ENCODE measurements at regions of chr11 and their contacts with region 1.

Region 1: DNA sequence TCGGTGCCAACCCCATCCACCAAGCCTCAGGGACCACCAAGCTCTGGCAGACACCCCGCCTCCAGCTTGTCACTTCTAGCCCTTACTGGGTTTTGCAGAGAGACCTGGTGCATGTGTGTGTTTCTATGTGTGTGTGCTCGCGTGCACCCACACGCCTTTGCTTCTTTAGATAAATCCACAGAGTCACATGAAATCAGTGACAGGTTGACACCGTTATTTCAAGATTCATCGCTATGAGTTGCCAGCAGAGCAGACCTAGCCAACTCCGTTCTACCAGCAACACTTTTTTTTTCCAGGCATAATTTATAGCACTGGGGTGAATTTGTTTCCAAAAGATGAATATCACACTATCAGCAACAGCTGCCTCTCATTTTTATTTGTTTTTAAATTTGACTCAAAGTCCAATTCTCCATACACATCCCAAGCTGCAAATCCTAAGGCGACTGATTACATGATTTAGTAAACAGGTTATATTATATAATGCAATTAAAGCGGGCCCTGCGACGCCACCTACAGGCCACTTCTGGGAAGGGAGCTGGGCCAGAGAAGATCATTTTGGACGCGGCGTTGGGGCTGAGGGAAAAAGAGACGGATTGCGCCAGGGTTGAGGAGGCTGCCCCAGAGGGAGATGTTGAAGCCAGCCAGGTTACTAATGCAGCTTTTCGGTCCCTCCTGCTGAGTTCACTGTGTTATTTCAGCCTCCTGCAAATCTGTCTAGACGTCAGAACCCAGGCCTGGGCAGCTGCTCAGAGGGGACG is 150.5 kb downstream of the FEZ1 start:
- DNase-seq: peak; percentile 82
- ATAC-seq: peak; percentile 57
- H3K4me3 Mint-ChIP-seq: no peak overlapping the region
- H3K27ac Mint-ChIP-seq: no peak overlapping the region
- H3K4me1 Mint-ChIP-seq: peaks cover 57% of the 10 kb centered on the region
- H3K27me3 Mint-ChIP-seq: peaks cover 20% of the 10 kb centered on the region
- CTCF ChIP-seq: peak; percentile 77

Region 2: GRCh38 chr11:125123947-125124617 is 221.5 kb before region 1 on chr11:
- CTCF ChIA-PET with region 1: interaction called, 20 read pairs
- POLR2A ChIA-PET with region 1: interaction called, 3 read pairs
- DNase-seq: peak; percentile 58
- ATAC-seq: peak; percentile 99
- H3K4me3 Mint-ChIP-seq: no peak overlapping the region
- H3K27ac Mint-ChIP-seq: no peak overlapping the region
- H3K4me1 Mint-ChIP-seq: no peaks in the 10 kb centered on the region
- H3K27me3 Mint-ChIP-seq: peaks cover 77% of the 10 kb centered on the region
- CTCF ChIP-seq: 0 out of 2 replicates have a peak, but pooled peaks have one; percentile 15

Region 3: GRCh38 chr11:125239585-125240560 is 105.7 kb before region 1 on chr11:
- CTCF ChIA-PET with region 1: interaction called, 11 read pairs
- POLR2A ChIA-PET with region 1: no interaction called
- DNase-seq: peak; percentile 57
- ATAC-seq: peak; percentile 71
- H3K4me3 Mint-ChIP-seq: peak overlapping the region; percentile 28
- H3K27ac Mint-ChIP-seq: 0 out of 2 replicates have a peak overlapping the region, but pooled peaks have one; percentile 5
- H3K4me1 Mint-ChIP-seq: peaks cover 43% of the 10 kb centered on the region
- H3K27me3 Mint-ChIP-seq: no peaks in the 10 kb centered on the region; the same call in 1 of the 2 replicates
- CTCF ChIP-seq: no peak

Region 4: DNA sequence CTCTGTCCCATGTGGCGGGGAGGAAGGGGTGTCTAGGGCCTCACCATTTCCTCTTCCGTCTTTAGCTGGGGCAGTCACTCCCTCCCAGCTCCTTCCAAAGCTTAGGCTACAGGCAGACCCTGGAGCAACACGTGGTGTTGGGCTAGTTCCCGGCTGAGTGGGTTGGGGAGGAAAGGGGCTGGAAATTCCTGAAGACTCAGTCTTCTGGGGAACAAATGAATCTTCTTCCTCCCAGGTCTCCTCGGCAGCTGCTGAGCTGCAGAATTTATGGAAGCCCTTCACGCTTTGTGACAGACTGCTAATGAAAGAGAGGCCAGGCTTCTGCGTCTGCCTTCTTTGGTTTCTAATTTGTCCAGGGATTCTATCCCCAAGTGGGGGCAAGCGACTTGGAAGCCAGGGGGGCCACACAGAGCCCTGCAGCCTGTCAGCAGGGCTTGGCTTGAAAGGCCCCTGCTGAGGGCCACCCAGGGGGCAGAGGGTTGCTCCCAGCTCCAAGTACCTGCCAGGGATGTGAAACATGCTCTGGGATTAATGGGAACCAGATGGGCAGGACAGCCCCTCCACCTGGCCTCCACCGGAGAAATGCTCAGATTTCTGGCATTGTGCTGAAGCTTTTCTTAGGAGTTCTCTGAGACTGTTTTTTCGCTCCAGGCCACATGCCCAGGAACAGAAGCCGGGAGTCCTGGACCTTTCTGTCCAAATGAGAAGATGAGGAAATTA is 57.9 kb before region 1 on chr11:
- CTCF ChIA-PET with region 1: interaction called, 16 read pairs
- POLR2A ChIA-PET with region 1: no interaction called
- DNase-seq: no peak
- ATAC-seq: peak; percentile 63
- H3K4me3 Mint-ChIP-seq: no peak overlapping the region
- H3K27ac Mint-ChIP-seq: no peak overlapping the region
- H3K4me1 Mint-ChIP-seq: peaks cover 19% of the 10 kb centered on the region
- H3K27me3 Mint-ChIP-seq: peaks cover 2% of the 10 kb centered on the region; the same call in 1 of the 2 replicates
- CTCF ChIP-seq: no peak

Region 5: DNA sequence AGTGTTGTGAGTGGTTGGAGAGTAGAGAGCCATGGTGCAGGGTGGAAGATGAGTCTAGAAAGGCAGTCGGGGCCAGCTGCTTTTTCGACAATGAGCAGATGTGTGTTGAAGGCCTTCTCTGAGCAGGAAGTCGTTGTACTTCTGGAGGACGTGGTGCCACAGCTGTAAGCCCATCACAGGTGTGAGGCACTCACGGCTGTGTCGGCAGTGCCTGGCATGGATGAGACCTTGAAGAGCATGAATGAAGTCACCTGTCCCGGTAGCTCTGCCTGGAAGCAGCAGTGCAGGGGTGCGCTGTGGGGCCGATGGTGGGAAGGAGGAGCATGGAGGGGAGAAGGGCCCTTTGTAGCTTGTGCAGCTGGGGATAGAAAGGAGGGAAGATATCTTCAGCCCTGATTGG is 15.8 kb before region 1 on chr11:
- CTCF ChIA-PET with region 1: interaction called, 37 read pairs
- POLR2A ChIA-PET with region 1: no interaction called
- DNase-seq: no peak
- ATAC-seq: no peak; the same call in 1 of the 2 replicates
- H3K4me3 Mint-ChIP-seq: no peak overlapping the region
- H3K27ac Mint-ChIP-seq: no peak overlapping the region
- H3K4me1 Mint-ChIP-seq: peaks cover 25% of the 10 kb centered on the region
- H3K27me3 Mint-ChIP-seq: peaks cover 4% of the 10 kb centered on the region; the same call in 1 of the 2 replicates
- CTCF ChIP-seq: no peak

Region 6: GRCh38 chr11:125404776-125405435 is 59.3 kb after region 1 on chr11:
- CTCF ChIA-PET with region 1: interaction called, 96 read pairs
- POLR2A ChIA-PET with region 1: no interaction called
- DNase-seq: peak; percentile 90
- ATAC-seq: peak; percentile 84
- H3K4me3 Mint-ChIP-seq: no peak overlapping the region
- H3K27ac Mint-ChIP-seq: 0 out of 2 replicates have a peak overlapping the region, but pooled peaks have one; percentile 29
- H3K4me1 Mint-ChIP-seq: peaks cover 61% of the 10 kb centered on the region
- H3K27me3 Mint-ChIP-seq: peaks cover 23% of the 10 kb centered on the region
- CTCF ChIP-seq: peak; percentile 98

Region 7: GRCh38 chr11:125464270-125464662 is 118.7 kb after region 1 on chr11:
- CTCF ChIA-PET with region 1: no interaction called
- POLR2A ChIA-PET with region 1: no interaction called
- DNase-seq: no peak
- ATAC-seq: no peak
- H3K4me3 Mint-ChIP-seq: no peak overlapping the region
- H3K27ac Mint-ChIP-seq: no peak overlapping the region
- H3K4me1 Mint-ChIP-seq: peaks cover 21% of the 10 kb centered on the region
- H3K27me3 Mint-ChIP-seq: no peaks in the 10 kb centered on the region
- CTCF ChIP-seq: no peak